ENCODE measurements at regions of chr16 and their contacts with region 1.

Region 1: GRCh38 chr16:85659805-85660495 is 28.8 kb downstream of the GINS2 start:
- DNase-seq: peak; percentile 33 to 76 (median 64)
- ATAC-seq: peak; percentile 91
- H3K4me3 ChIP-seq: no peak overlapping the region
- H3K4me3 Mint-ChIP-seq: no peak overlapping the region
- H3K27ac ChIP-seq: no peak overlapping the region
- H3K27ac Mint-ChIP-seq: no peak overlapping the region
- H3K4me1 ChIP-seq: no peaks in the 10 kb centered on the region
- H3K4me1 Mint-ChIP-seq: peaks cover 4% of the 10 kb centered on the region
- H3K27me3 ChIP-seq: no peaks in the 10 kb centered on the region
- H3K27me3 Mint-ChIP-seq: no peaks in the 10 kb centered on the region
- CTCF ChIP-seq: peak; percentile 81

Region 2: DNA sequence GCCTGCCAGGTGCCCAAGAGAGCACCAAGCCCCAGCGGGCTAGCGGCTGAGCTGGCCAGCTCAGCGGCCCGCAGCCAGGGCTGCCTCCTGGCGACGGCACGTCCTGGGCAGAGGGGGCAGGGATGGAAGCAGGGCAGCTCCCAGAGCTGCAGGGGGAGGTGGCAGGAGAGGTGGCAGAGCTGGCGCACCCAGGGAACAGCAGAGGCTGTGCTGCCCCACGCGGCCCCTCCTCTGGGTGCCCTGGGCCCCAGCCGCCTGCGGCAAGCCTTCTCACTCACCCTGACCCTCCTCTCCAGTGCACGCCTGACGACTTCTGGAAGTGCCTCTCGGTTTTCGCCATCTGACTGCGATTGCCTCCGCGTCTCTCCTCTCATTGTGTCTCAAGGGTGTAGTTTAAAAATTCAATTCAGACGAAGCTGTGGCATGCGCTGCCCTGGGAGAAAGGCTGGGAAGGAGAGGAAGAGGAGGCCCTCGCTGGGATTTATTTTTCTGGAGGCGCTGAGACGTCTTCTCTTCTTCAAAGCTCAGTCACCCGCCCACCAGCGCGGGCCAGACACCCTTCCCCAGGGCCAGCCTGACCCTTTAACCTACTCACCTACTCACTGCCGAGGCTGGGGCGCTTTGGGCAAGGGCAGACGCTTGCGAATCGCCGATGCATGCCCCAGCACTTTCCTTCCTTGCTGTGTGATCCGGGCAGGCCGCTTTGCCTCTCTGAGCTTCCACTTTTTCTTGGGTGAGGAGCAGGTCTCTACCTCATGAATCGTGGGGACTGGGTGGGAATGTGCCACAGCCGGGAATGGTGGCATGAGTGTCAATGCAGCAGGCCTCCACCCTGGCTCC is 21.9 kb before region 1 on chr16:
- CTCF ChIA-PET with region 1: interaction called, 9 read pairs
- POLR2A ChIA-PET with region 1: no interaction called
- intact Hi-C with region 1: loop called in 1 of 2 experiments (anchors 1 kb)
- DNase-seq: no peak
- ATAC-seq: no peak
- H3K4me3 ChIP-seq: no peak overlapping the region
- H3K4me3 Mint-ChIP-seq: no peak overlapping the region
- H3K27ac ChIP-seq: no peak overlapping the region
- H3K27ac Mint-ChIP-seq: peak overlapping the region; percentile 22
- H3K4me1 ChIP-seq: no peaks in the 10 kb centered on the region
- H3K4me1 Mint-ChIP-seq: peaks cover 7% of the 10 kb centered on the region
- H3K27me3 ChIP-seq: no peaks in the 10 kb centered on the region
- H3K27me3 Mint-ChIP-seq: no peaks in the 10 kb centered on the region
- CTCF ChIP-seq: no peak

Region 3: GRCh38 chr16:85707528-85708321 is 47.8 kb after region 1 on chr16:
- CTCF ChIA-PET with region 1: no interaction called
- POLR2A ChIA-PET with region 1: no interaction called
- intact Hi-C with region 1: no loop called
- DNase-seq: no peak
- ATAC-seq: no peak
- H3K4me3 ChIP-seq: no peak overlapping the region
- H3K4me3 Mint-ChIP-seq: no peak overlapping the region
- H3K27ac ChIP-seq: no peak overlapping the region
- H3K27ac Mint-ChIP-seq: no peak overlapping the region
- H3K4me1 ChIP-seq: no peaks in the 10 kb centered on the region
- H3K4me1 Mint-ChIP-seq: no peaks in the 10 kb centered on the region
- H3K27me3 ChIP-seq: no peaks in the 10 kb centered on the region
- H3K27me3 Mint-ChIP-seq: no peaks in the 10 kb centered on the region
- CTCF ChIP-seq: no peak

Region 4: GRCh38 chr16:85759631-85760419 is 99.9 kb after region 1 on chr16:
- CTCF ChIA-PET with region 1: interaction called, 26 read pairs
- POLR2A ChIA-PET with region 1: no interaction called
- intact Hi-C with region 1: loop called in 1 of 2 experiments (anchors 1 kb)
- DNase-seq: peak in 4 of 9 experiments; percentile 38 to 69 (median 46)
- ATAC-seq: peak; percentile 52
- H3K4me3 ChIP-seq: no peak overlapping the region
- H3K4me3 Mint-ChIP-seq: no peak overlapping the region
- H3K27ac ChIP-seq: no peak overlapping the region
- H3K27ac Mint-ChIP-seq: no peak overlapping the region
- H3K4me1 ChIP-seq: no peaks in the 10 kb centered on the region
- H3K4me1 Mint-ChIP-seq: peaks cover 10% of the 10 kb centered on the region
- H3K27me3 ChIP-seq: peaks cover 0 to 4% of the 10 kb centered on the region in 2 experiments
- H3K27me3 Mint-ChIP-seq: peaks cover 27% of the 10 kb centered on the region
- CTCF ChIP-seq: peak; percentile 50

Region 5: GRCh38 chr16:85782451-85782850 is 122.5 kb after region 1 on chr16:
- CTCF ChIA-PET with region 1: no interaction called
- POLR2A ChIA-PET with region 1: no interaction called
- intact Hi-C with region 1: no loop called
- DNase-seq: no peak
- ATAC-seq: no peak
- H3K4me3 ChIP-seq: no peak overlapping the region
- H3K4me3 Mint-ChIP-seq: no peak overlapping the region
- H3K27ac ChIP-seq: no peak overlapping the region
- H3K27ac Mint-ChIP-seq: no peak overlapping the region
- H3K4me1 ChIP-seq: no peaks in the 10 kb centered on the region
- H3K4me1 Mint-ChIP-seq: peaks cover 11% of the 10 kb centered on the region
- H3K27me3 ChIP-seq: no peaks in the 10 kb centered on the region
- H3K27me3 Mint-ChIP-seq: no peaks in the 10 kb centered on the region
- CTCF ChIP-seq: no peak

Measured in CD8-positive, alpha-beta T cell (primary cell).